ENCODE measurements at regions of chr1 and their contacts with region 1.

Region 1: GRCh38 chr1:205750138-205751035 is at the start of gene NUCKS1:
- DNase-seq: peak; percentile 86
- ATAC-seq: peak; percentile 80
- H3K4me3 Mint-ChIP-seq: peak within 1 kb of the TSS; percentile 96
- H3K27ac Mint-ChIP-seq: peak within 1 kb of the TSS; percentile 98
- H3K4me1 Mint-ChIP-seq: peaks cover 43% of the 10 kb centered on the region
- H3K27me3 Mint-ChIP-seq: no peaks in the 10 kb centered on the region
- CTCF ChIP-seq: no peak
- total RNA-seq, gene NUCKS1: 113 and 130 TPM in 2 replicates

Region 2: GRCh38 chr1:205121660-205122488 is 628.5 kb before region 1 on chr1 and contains the start of gene RBBP5:
- CTCF ChIA-PET with region 1: no interaction called
- POLR2A ChIA-PET with region 1: no interaction called
- intact Hi-C with region 1: loop called (anchors 10 kb)
- DNase-seq: peak; percentile 94
- ATAC-seq: peak; percentile 92
- H3K4me3 Mint-ChIP-seq: peak within 1 kb of the TSS; percentile 99
- H3K27ac Mint-ChIP-seq: peak within 1 kb of the TSS; percentile 100
- H3K4me1 Mint-ChIP-seq: peaks cover 57% of the 10 kb centered on the region
- H3K27me3 Mint-ChIP-seq: no peaks in the 10 kb centered on the region
- CTCF ChIP-seq: no peak
- total RNA-seq, gene RBBP5: 16.3 and 19.7 TPM in 2 replicates

Region 3: DNA sequence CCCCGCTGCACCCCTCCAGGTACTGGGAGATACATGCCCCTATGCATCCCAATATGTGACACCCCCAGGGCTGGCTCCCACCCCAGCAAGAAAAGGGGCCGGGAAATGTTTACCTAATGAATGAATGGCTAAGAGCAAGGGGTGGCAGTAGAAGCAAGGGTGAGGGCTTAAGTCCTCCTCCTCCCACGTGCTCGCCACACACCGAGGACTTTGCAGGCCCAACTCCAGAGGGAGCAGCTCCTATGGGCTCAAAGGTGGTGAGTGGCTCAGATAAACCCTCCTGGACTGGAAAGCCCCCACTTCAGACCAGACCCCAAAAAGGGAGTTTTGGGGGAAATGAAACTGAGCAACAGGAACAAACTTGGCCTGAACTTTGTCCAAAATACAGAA is 81.4 kb before region 1 on chr1:
- CTCF ChIA-PET with region 1: no interaction called
- POLR2A ChIA-PET with region 1: interaction called, 18 read pairs
- intact Hi-C with region 1: no loop called
- DNase-seq: no peak
- ATAC-seq: peak; percentile 68
- H3K4me3 Mint-ChIP-seq: peak overlapping the region; percentile 80
- H3K27ac Mint-ChIP-seq: peak overlapping the region; percentile 93
- H3K4me1 Mint-ChIP-seq: peaks cover 87% of the 10 kb centered on the region
- H3K27me3 Mint-ChIP-seq: no peaks in the 10 kb centered on the region
- CTCF ChIP-seq: no peak

Region 4: DNA sequence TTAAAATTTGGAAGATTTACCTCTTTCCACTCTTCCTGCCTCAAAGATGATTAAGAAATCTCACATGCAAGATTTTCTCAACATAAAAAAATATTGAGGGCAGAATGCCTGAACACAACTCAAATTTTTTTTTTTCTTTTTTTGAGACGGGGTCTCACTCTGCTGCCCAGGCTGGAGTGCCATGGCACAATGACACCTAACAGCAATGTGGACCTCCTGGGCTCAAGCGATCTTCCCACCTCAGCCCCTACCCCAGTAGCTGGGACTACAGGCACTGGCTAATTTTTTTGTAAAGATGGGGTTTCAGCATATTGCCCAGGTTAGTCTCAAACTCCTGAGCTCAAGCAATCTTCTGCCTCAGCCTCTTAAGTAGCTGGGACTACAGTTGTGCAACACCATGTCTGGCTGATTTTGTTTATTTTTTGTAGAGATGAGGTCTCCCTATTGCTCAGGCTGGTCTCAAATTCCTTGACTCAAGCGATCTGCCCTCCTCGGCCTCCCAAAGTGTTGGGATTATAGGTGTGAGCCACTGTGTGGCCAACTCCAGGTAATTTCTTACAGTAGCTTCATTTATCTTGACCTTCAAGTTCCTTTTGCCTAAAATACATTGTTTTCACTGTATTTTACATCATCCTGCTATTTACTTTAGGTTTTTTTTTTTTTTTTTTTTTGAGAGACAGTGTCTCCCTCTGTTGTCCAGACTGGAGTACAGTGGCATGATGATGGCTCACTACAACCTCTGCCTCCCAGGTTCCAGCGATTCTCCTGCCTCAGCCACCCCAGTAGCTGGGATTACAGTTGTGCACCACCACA is 10.8 kb before region 1 on chr1:
- CTCF ChIA-PET with region 1: interaction called, 4 read pairs
- POLR2A ChIA-PET with region 1: interaction called, 5 read pairs
- intact Hi-C with region 1: loop called (anchors 1 kb)
- DNase-seq: no peak
- ATAC-seq: no peak
- H3K4me3 Mint-ChIP-seq: no peak overlapping the region
- H3K27ac Mint-ChIP-seq: no peak overlapping the region
- H3K4me1 Mint-ChIP-seq: peaks cover 42% of the 10 kb centered on the region
- H3K27me3 Mint-ChIP-seq: no peaks in the 10 kb centered on the region
- CTCF ChIP-seq: no peak

Region 5: GRCh38 chr1:205849619-205850355 is 99.4 kb after region 1 on chr1 and contains the start of gene PM20D1:
- CTCF ChIA-PET with region 1: no interaction called
- POLR2A ChIA-PET with region 1: interaction called, 8 read pairs
- intact Hi-C with region 1: loop called (anchors 1 kb)
- DNase-seq: peak; percentile 69
- ATAC-seq: peak; percentile 99
- H3K4me3 Mint-ChIP-seq: peak within 1 kb of the TSS; percentile 93
- H3K27ac Mint-ChIP-seq: peak within 1 kb of the TSS; percentile 91
- H3K4me1 Mint-ChIP-seq: peaks cover 14% of the 10 kb centered on the region
- H3K27me3 Mint-ChIP-seq: no peaks in the 10 kb centered on the region
- CTCF ChIP-seq: no peak
- total RNA-seq, gene PM20D1: 1.2 and 2.1 TPM in 2 replicates

Measured in activated B cell treated with CpG ODN at 0.5 μM for 24 hours (primary cell).